ENCODE measurements at regions of chr17 and their contacts with region 1.

Region 1: DNA sequence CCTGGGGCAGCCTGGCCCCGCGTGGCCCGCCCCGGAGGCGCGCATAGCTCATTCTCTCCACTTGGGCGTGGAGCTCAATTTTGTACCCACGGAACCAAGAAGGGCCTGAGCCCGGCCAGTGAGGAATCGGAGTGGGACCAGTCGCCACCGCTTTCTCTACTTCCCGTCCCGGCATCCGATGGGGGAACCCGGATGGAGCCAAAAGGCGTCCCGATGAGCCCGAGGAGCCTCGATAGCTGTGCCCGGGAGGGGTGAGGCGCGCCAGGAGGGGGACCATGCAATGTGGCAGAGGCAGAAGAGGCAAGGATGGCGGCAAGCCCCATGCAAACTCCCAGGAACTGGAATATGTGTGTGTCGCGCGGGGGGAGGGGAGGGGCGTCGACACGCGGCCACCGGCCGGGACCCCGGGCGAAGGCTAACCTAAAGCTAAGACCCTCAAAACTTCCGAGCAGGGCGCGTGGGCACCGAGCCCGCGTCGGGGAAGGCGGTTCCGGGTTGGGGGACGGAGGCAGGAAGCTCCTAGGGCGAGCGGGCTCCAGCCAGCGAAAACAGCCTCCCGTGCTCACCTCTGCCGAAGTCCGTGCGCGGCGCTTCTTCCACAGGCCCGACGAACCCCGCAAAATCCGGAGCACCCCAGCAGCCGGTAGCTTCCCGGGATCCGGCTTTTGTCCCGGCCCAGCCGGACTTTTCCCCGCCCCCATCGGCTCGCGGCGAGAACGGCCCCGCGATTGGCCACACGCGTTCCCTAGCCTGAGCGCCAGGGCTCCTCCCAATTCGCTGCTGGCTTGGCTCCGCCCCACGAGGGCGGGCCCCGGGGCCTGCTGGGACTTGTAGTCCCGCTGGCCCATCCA is at the start of gene ACLY:
- DNase-seq: peak; percentile 93 to 94 (median 93)
- H3K4me3 ChIP-seq: peak within 1 kb of the TSS; percentile 78 to 97
- H3K4me3 Mint-ChIP-seq: peak within 1 kb of the TSS; percentile 87 to 96 (median 90)
- H3K27ac ChIP-seq: peak within 1 kb of the TSS; percentile 88
- H3K27ac Mint-ChIP-seq: peak within 1 kb of the TSS; percentile 76 to 93 (median 87)
- H3K4me1 ChIP-seq: peaks cover 48% of the 10 kb centered on the region
- H3K4me1 Mint-ChIP-seq: peaks cover 23 to 46% (median 33%) of the 10 kb centered on the region in 4 donors
- H3K27me3 ChIP-seq: no peaks in the 10 kb centered on the region
- H3K27me3 Mint-ChIP-seq: no peaks in the 10 kb centered on the region
- total RNA-seq, gene ACLY: 84.4 to 88.5 TPM

Region 2: DNA sequence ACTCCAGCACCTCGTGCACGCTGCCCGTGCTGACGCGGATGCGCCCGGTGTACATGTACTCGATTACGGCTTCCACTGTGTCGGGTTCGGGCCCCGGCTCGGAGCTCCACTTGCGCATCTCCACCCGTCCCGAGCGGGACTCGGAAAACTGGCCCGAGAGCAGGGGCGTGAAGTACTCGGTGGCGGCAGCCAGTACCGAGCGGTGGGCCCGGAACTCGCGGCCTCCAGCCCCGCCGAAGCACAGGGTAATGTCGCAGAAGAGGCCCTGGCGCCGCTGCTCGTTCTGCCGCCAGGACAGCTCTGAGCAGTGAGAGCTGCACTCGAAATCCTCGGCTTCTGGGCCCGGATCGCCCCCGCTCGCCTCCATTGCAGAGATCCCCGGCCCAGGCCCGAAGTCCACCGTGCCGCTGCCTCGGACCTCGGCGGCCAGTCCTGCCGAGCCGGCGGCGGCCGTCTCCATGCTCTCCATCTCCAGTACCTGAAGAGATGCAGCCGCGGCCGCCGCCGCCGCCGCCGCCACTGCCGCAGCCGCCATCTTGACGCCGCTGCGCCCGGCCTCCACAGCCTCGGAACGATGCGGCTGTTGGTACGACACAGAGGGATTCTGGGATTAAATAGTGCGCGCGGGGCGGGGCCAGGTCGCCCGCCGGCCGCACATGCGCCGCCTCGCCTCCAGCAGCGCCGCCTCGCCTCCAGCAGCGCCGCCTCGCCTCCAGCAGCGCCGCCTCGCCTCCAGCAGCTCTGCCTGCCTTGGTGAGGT is 53.5 kb before region 1 on chr17 and contains the start of gene KLHL11:
- CTCF ChIA-PET with region 1: no interaction called
- POLR2A ChIA-PET with region 1: interaction called, 18 read pairs
- intact Hi-C with region 1: loop called (anchors 1 kb)
- DNase-seq: peak; percentile 85 to 88 (median 87)
- H3K4me3 ChIP-seq: peak within 1 kb of the TSS; percentile 26 to 78
- H3K4me3 Mint-ChIP-seq: peak within 1 kb of the TSS in 1 of 8 donors; percentile 82
- H3K27ac ChIP-seq: peak within 1 kb of the TSS; percentile 71
- H3K27ac Mint-ChIP-seq: peak within 1 kb of the TSS in 3 of 7 donors; percentile 89 to 93 (median 92)
- H3K4me1 ChIP-seq: peaks cover 42% of the 10 kb centered on the region
- H3K4me1 Mint-ChIP-seq: peaks cover 11 to 37% (median 19%) of the 10 kb centered on the region in 4 donors
- H3K27me3 ChIP-seq: no peaks in the 10 kb centered on the region
- H3K27me3 Mint-ChIP-seq: no peaks in the 10 kb centered on the region
- total RNA-seq, gene KLHL11: 20.6 to 20.8 TPM

Region 3: DNA sequence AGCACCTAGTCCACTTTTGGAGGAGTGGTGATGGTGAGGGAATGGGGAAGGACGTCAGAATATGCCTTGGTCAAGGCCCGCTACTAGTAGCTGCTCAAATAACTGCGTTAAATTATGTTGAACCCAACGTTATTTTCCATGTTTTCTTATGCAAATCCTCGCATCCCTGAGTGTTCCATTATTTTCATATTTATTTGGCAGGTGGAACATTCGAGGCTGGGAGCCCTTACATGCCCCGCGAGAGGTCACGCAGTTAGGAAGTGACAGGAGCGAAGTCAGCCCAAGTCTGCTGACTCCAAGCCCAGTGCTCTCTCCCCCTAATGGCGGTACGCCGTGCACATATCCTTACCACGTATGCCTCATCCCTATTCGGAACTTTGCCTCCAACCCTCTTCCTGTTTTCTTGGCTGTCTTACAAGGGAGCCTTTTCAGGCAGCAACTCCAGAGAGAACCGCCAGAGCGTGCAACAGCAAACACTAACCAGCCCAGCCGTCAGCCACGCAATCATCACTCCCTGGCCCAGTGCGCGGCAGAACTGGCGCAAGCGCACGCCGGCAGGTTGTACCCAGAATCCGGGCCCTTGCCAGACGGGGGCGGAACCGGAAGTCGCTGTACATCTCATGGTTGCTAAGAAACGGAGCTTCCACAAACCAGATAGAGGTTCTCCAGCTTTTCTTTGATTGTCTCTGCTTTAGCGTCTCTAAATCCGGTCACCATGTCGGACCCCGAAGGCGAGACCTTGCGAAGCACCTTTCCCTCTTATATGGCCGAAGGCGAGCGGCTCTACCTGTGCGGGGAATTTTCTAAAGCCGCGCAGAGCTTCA is 11.7 kb after region 1 on chr17 and contains the start of gene ODAD4:
- CTCF ChIA-PET with region 1: interaction called, 26 read pairs
- POLR2A ChIA-PET with region 1: interaction called, 61 read pairs
- intact Hi-C with region 1: loop called (anchors 1 kb)
- DNase-seq: peak; percentile 94 to 98 (median 98)
- H3K4me3 ChIP-seq: peak within 1 kb of the TSS; percentile 73 to 80
- H3K4me3 Mint-ChIP-seq: peak within 1 kb of the TSS; percentile 90 to 99 (median 98)
- H3K27ac ChIP-seq: peak within 1 kb of the TSS; percentile 85
- H3K27ac Mint-ChIP-seq: peak within 1 kb of the TSS; percentile 91 to 100 (median 99)
- H3K4me1 ChIP-seq: peaks cover 23% of the 10 kb centered on the region
- H3K4me1 Mint-ChIP-seq: peaks cover 16 to 35% (median 23%) of the 10 kb centered on the region in 4 donors
- H3K27me3 ChIP-seq: no peaks in the 10 kb centered on the region
- H3K27me3 Mint-ChIP-seq: no peaks in the 10 kb centered on the region
- total RNA-seq, gene ODAD4: 0.20 TPM in 1 of 2 experiments, not detected in the other

Region 4: GRCh38 chr17:42039794-42040763 is 121.5 kb after region 1 on chr17:
- CTCF ChIA-PET with region 1: no interaction called
- POLR2A ChIA-PET with region 1: no interaction called
- intact Hi-C with region 1: no loop called
- DNase-seq: no peak
- H3K4me3 ChIP-seq: no peak overlapping the region
- H3K4me3 Mint-ChIP-seq: no peak overlapping the region
- H3K27ac ChIP-seq: no peak overlapping the region
- H3K27ac Mint-ChIP-seq: no peak overlapping the region
- H3K4me1 ChIP-seq: no peaks in the 10 kb centered on the region
- H3K4me1 Mint-ChIP-seq: no peaks in the 10 kb centered on the region
- H3K27me3 ChIP-seq: no peaks in the 10 kb centered on the region
- H3K27me3 Mint-ChIP-seq: peaks cover 3 to 12% of the 10 kb centered on the region in 2 donors

Region 5: DNA sequence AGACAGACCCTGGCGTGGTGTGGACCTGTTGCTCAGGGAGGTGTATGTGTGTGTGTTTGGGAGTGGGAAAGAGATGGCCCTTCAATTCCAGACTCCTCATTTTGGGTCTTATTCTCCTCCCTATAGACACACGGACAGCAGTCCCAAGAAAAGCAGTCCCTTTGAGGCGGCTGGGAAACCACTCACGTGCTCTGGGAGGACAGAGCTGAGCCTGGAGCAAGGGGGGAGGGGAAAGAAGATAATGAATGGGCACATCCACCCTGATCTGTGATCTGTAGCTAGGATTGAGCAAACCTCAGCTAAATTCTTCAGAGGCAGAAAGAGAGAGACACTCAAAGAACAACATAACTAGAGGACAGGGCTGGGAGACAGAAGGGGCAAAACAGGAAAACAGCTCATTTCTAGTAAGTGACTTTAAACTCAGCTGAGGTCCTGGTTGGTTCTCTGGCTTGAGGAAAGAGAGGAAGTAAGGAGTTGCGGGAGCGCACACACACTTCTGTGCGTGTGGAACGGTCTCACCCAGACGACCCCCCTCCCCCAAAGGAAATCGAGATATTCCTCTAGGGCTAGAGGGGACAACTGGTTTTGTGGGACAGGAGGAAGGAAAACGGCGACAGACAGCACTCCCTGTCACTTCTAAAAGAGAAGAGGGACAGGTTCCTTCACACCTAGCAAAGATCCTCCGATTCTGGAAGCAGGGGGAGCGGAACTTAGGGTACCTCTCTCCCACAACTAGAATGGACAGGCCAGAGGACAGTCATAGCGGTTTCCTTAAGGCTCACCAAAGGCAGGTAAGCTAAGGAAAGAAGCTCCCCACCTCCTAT is 235.6 kb after region 1 on chr17:
- CTCF ChIA-PET with region 1: no interaction called
- POLR2A ChIA-PET with region 1: no interaction called
- intact Hi-C with region 1: loop called (anchors 1 kb)
- DNase-seq: no peak
- H3K4me3 ChIP-seq: peak overlapping the region; percentile 86 to 96
- H3K4me3 Mint-ChIP-seq: peak overlapping the region; percentile 89 to 98 (median 94)
- H3K27ac ChIP-seq: peak overlapping the region; percentile 96
- H3K27ac Mint-ChIP-seq: peak overlapping the region; percentile 82 to 98 (median 96)
- H3K4me1 ChIP-seq: peaks cover 42% of the 10 kb centered on the region
- H3K4me1 Mint-ChIP-seq: peaks cover 24 to 49% (median 37%) of the 10 kb centered on the region in 4 donors
- H3K27me3 ChIP-seq: no peaks in the 10 kb centered on the region
- H3K27me3 Mint-ChIP-seq: no peaks in the 10 kb centered on the region

Measured in CD4-positive, alpha-beta memory T cell (primary cell).